Dendritic cell treated with granulocyte-macrophage colony-stimulating factor and Interleukin-4, amounts not matched to agents 40 ng/mL and 50 ng/mL, for 4 days (primary cell): ENCODE measurements at regions of chr5 and their contacts with region 1.

Region 1: DNA sequence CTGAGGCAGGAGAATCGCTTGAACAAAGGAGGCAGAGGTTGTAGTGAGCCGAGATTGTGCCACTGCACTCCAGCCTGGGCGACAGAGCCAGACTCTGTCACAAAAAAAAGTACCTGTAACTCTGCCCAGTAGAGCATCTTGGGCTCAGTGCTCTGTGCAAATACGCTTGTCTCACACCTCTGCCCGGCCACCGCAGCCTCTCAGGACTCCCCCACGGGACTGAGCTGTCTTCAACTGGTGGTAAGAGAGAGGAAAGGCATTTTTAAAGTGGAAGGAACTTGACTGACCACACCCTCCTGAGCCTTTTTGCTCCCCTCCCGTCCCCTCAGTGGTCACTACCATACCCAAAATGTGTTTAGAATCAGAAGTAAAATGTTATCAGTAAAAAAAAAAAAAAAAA is 174.3 kb upstream of the PIK3R1 start:
- H3K4me3 Mint-ChIP-seq: peak overlapping the region; percentile 49
- H3K27ac Mint-ChIP-seq: peak overlapping the region; percentile 84
- H3K4me1 Mint-ChIP-seq: peaks cover 69% of the 10 kb centered on the region
- H3K27me3 Mint-ChIP-seq: no peaks in the 10 kb centered on the region

Region 2: GRCh38 chr5:67983251-67984110 is 57.8 kb before region 1 on chr5:
- intact Hi-C with region 1: loop called (anchors 1 kb)
- H3K4me3 Mint-ChIP-seq: no peak overlapping the region
- H3K27ac Mint-ChIP-seq: peak overlapping the region; percentile 80
- H3K4me1 Mint-ChIP-seq: peaks cover 20% of the 10 kb centered on the region
- H3K27me3 Mint-ChIP-seq: no peaks in the 10 kb centered on the region

Region 3: DNA sequence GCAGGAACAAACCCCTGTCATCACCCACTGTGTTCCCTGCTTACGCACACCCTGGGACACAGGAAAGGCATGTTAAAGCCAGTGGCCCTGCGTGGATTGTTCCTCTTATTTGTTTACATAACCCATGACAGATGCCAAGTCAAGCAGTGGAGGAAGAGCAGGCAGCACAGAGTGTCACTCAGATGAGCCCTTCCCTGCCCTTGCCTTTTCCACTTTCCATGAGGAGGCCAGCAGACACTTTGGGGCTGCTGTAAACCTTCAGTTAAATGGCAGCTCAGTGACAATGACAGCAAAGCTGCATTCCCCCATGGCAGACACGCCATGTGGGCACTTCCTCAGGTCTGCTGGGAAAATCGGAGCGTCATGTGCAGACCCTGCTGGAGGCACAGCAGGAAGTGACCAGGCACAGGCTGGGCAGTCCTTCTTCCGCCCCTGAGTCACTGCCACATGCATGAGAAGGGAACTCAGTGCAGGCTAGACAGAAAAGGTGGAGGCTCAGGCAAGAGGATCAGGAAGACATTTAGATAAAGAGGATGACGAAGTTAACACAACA is 42.5 kb before region 1 on chr5:
- intact Hi-C with region 1: loop called (anchors 5 kb)
- H3K4me3 Mint-ChIP-seq: peak overlapping the region; percentile 11
- H3K27ac Mint-ChIP-seq: peak overlapping the region; percentile 91
- H3K4me1 Mint-ChIP-seq: peaks cover 31% of the 10 kb centered on the region
- H3K27me3 Mint-ChIP-seq: no peaks in the 10 kb centered on the region

Region 4: GRCh38 chr5:68196876-68197275 is 155.6 kb after region 1 on chr5:
- intact Hi-C with region 1: loop called (anchors 1 kb)
- H3K4me3 Mint-ChIP-seq: no peak overlapping the region
- H3K27ac Mint-ChIP-seq: peak overlapping the region; percentile 70
- H3K4me1 Mint-ChIP-seq: peaks cover 53% of the 10 kb centered on the region
- H3K27me3 Mint-ChIP-seq: no peaks in the 10 kb centered on the region

Region 5: DNA sequence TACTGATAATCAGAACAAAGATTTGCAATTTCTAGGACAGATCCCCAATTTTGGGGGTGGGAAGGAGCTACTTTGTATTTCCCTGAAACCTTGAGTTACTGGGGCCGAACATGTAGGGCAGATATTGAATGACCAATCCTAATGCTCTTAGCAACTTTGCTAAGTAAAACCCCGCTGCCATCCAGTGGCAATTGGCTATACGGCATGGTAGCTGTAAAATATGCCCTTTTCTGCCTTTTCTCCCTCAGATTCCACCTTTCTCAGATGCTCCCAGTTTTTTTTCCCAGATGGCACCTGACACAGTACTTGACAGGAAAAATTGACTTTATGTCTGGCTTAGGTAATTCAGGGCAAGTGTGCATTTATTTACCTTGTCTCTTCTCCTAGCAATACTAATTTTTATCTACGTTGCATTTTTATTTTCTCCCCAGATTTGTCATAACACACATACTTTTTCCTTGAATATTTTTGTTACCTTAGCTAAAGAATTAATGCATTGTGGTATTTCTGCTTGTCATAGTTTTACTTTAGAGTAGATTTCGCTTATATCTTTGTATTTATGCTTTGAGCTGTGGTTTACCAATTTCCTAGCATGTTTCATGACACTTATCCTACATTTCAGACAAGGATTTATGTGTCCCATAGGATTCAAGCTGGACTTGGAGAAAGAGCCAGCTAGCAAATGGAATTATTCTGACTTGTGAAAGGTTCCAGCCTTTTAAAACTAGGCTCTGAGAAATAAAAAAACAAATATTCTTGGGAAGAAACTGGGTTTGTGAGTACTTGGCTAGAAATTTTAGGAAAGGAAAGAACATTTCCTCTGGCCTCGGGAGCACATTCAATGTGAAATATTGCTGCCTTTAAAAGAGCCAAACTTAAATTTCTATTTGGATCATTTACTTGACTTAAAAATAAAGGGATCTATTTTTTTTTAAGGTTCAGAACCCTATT is 211.7 kb after region 1 on chr5:
- intact Hi-C with region 1: loop called (anchors 10 kb)
- H3K4me3 Mint-ChIP-seq: no peak overlapping the region
- H3K27ac Mint-ChIP-seq: peak overlapping the region; percentile 52
- H3K4me1 Mint-ChIP-seq: peaks cover 79% of the 10 kb centered on the region
- H3K27me3 Mint-ChIP-seq: no peaks in the 10 kb centered on the region

Region 6: DNA sequence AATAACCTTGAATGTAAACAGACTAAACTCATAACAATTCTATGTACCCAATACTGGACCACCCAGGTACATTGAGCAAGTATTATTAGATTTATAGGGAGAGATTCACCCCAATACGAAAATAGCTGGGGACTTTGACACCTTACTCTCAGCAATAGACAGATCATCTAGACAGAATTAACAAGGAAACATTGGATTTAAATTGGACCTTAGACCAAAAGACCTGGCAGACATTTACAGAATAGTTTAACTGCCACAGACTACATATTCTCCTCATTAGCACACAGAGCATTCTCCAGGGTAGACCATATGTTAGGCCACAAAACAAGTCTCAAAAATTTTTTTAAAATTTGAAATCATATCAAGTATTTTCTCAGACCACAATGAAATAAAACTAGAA is 571.7 kb after region 1 on chr5:
- intact Hi-C with region 1: no loop called
- H3K4me3 Mint-ChIP-seq: no peak overlapping the region
- H3K27ac Mint-ChIP-seq: no peak overlapping the region
- H3K4me1 Mint-ChIP-seq: no peaks in the 10 kb centered on the region
- H3K27me3 Mint-ChIP-seq: no peaks in the 10 kb centered on the region